ENCODE measurements at regions of chr1 and their contacts with region 1.

Region 1: GRCh38 chr1:77683160-77684148 is 996 bp upstream of the ZZZ3 start:
- DNase-seq: peak; percentile 91 to 94 (median 92)
- H3K4me3 ChIP-seq: peak overlapping the region; percentile 17 to 81
- H3K4me3 Mint-ChIP-seq: peak overlapping the region; percentile 85 to 95 (median 91)
- H3K27ac ChIP-seq: peak overlapping the region; percentile 88
- H3K27ac Mint-ChIP-seq: peak overlapping the region; percentile 93 to 98 (median 97)
- H3K4me1 ChIP-seq: peaks cover 45% of the 10 kb centered on the region
- H3K4me1 Mint-ChIP-seq: peaks cover 20 to 42% (median 31%) of the 10 kb centered on the region in 4 donors
- H3K27me3 ChIP-seq: no peaks in the 10 kb centered on the region
- H3K27me3 Mint-ChIP-seq: no peaks in the 10 kb centered on the region

Region 2: GRCh38 chr1:75724472-75725022 is 1958.9 kb before region 1 on chr1 and contains the start of gene ACADM:
- CTCF ChIA-PET with region 1: no interaction called
- POLR2A ChIA-PET with region 1: no interaction called
- intact Hi-C with region 1: loop called (anchors 2 kb)
- DNase-seq: peak; percentile 77 to 84 (median 79)
- H3K4me3 ChIP-seq: peak within 1 kb of the TSS; percentile 49 to 80
- H3K4me3 Mint-ChIP-seq: peak within 1 kb of the TSS; percentile 96 to 100 (median 99)
- H3K27ac ChIP-seq: peak within 1 kb of the TSS; percentile 73
- H3K27ac Mint-ChIP-seq: peak within 1 kb of the TSS; percentile 93 to 99 (median 97)
- H3K4me1 ChIP-seq: peaks cover 39% of the 10 kb centered on the region
- H3K4me1 Mint-ChIP-seq: peaks cover 22 to 49% (median 33%) of the 10 kb centered on the region in 4 donors
- H3K27me3 ChIP-seq: no peaks in the 10 kb centered on the region
- H3K27me3 Mint-ChIP-seq: no peaks in the 10 kb centered on the region
- total RNA-seq, gene ACADM: 31.9 to 33.4 TPM

Region 3: DNA sequence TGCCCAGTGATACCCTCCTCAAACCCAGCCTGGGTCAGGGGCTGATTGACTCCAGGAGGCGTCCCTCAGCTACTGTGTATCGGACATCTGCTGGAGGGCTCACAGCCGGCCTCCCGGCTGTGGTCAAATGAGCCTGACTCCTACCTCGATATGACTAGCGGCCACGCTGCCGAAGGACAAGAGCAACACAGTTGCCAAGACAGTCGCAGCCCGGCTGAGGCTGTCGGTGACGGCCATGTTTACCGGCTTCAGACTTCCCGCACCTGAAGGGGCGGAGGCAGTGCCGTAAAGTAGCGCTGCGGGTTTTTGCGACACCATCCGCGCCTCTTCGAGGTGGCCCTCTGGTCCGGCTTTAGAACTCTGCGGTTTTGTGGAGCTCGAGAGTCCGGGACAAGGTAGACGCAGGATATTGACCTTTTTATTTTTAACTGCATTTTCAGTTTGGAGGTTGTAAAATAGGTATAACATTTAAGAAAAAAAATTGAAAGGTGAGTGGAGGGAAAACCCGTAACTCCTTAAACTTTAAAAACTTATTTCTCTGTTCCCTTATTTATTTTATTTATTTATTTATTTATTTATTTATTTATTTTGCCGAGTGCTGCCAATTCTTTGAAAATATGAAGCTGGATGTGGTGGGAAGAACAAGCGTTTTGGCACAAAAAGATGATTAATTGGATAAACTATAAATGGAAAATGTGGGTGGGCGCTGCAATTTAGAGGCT is 464.1 kb before region 1 on chr1 and contains the start of gene PIGK:
- CTCF ChIA-PET with region 1: no interaction called
- POLR2A ChIA-PET with region 1: interaction called, 8 read pairs
- intact Hi-C with region 1: loop called (anchors 10 kb)
- DNase-seq: peak; percentile 84 to 87 (median 86)
- H3K4me3 ChIP-seq: peak within 1 kb of the TSS; percentile 90 to 99
- H3K4me3 Mint-ChIP-seq: peak within 1 kb of the TSS; percentile 93 to 99 (median 96)
- H3K27ac ChIP-seq: peak within 1 kb of the TSS; percentile 74
- H3K27ac Mint-ChIP-seq: peak within 1 kb of the TSS; percentile 93 to 97 (median 96)
- H3K4me1 ChIP-seq: peaks cover 33% of the 10 kb centered on the region
- H3K4me1 Mint-ChIP-seq: peaks cover 28 to 64% (median 50%) of the 10 kb centered on the region in 4 donors
- H3K27me3 ChIP-seq: no peaks in the 10 kb centered on the region
- H3K27me3 Mint-ChIP-seq: no peaks in the 10 kb centered on the region
- total RNA-seq, gene PIGK: 26.4 to 28.2 TPM

Region 4: DNA sequence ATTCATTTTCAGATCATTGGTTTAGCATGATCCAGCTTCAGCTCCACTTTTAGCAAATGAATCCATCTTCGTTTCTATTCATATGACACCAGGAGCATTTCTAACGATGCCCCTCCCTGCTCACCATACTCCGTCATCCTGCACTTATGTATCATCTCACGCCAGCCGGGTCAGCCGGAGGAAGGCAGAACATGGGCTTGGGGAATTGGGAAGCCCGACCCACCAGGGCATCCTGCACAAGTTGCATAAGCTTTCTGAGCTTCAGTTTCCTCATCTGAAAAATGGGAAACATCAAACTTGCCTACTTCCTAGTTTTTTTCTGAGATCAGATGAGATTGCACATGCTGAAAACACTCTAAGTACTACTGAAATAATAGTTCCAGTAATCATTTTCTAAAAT is 207.0 kb before region 1 on chr1:
- CTCF ChIA-PET with region 1: no interaction called
- POLR2A ChIA-PET with region 1: no interaction called
- intact Hi-C with region 1: no loop called
- DNase-seq: no peak
- H3K4me3 ChIP-seq: no peak overlapping the region
- H3K4me3 Mint-ChIP-seq: no peak overlapping the region
- H3K27ac ChIP-seq: no peak overlapping the region
- H3K27ac Mint-ChIP-seq: no peak overlapping the region
- H3K4me1 ChIP-seq: no peaks in the 10 kb centered on the region
- H3K4me1 Mint-ChIP-seq: peaks cover 0 to 6% (median 3%) of the 10 kb centered on the region in 4 donors
- H3K27me3 ChIP-seq: no peaks in the 10 kb centered on the region
- H3K27me3 Mint-ChIP-seq: peaks cover 0 to 3% of the 10 kb centered on the region in 2 donors

Region 5: DNA sequence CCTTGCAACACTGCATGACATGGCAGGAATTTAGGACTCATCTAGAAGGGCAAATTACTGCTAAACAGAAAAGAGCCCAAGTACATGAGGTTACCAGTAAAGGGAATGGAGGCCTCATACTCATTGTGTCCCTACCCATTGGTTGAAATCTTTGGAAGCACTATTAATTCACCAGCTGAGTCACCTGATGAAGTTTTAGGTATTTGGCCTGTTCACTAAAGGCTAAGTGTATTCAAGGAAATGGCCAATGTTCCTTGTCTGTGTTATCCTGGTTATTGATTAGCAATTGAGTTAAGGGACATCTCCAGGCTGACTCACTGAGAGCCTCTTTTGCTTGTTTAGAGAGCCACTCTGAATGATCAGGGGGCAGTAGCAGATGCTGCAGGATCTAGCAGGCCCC is 189.4 kb before region 1 on chr1:
- CTCF ChIA-PET with region 1: no interaction called
- POLR2A ChIA-PET with region 1: no interaction called
- intact Hi-C with region 1: no loop called
- DNase-seq: no peak
- H3K4me3 ChIP-seq: no peak overlapping the region
- H3K4me3 Mint-ChIP-seq: no peak overlapping the region
- H3K27ac ChIP-seq: no peak overlapping the region
- H3K27ac Mint-ChIP-seq: no peak overlapping the region
- H3K4me1 ChIP-seq: no peaks in the 10 kb centered on the region
- H3K4me1 Mint-ChIP-seq: peaks cover 0 to 8% (median 2%) of the 10 kb centered on the region in 4 donors
- H3K27me3 ChIP-seq: no peaks in the 10 kb centered on the region
- H3K27me3 Mint-ChIP-seq: no peaks in the 10 kb centered on the region

Region 6: DNA sequence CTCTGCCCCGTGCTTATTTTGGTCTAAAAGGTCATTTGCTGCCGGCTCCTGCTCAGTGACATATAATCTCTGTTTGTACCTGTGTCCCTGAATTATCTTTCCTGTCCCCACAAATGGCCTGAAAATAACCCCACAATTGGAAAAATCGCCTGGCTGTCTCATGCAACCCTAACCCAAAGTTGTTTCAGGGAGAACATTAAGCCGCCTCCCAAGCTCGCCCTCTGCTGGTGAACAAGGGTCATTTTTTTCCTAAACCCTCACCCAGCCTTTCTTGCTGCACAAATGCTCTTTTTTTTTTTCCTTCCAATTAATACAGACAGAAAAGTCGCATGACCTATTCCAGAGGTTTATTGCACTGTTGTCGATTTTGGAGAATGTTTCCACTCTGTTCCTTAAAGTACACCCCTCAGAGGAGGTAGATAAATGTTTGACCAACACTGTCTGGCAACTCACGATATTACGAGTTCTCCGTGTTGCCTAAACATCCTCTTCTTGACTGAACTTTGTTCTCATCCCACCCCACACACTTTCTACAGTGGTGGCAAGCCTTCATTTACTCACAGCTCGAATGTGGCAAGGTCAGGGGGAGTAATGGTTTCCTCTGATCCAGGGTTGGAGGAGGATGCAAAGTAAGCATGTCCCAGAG is 149.7 kb before region 1 on chr1:
- CTCF ChIA-PET with region 1: interaction called, 3 read pairs
- POLR2A ChIA-PET with region 1: no interaction called
- intact Hi-C with region 1: loop called (anchors 2 kb)
- DNase-seq: peak; percentile 60 to 65 (median 64)
- H3K4me3 ChIP-seq: no peak overlapping the region
- H3K4me3 Mint-ChIP-seq: peak overlapping the region in 5 of 8 donors; percentile 17 to 65 (median 32)
- H3K27ac ChIP-seq: no peak overlapping the region
- H3K27ac Mint-ChIP-seq: peak overlapping the region in 3 of 7 donors; percentile 32 to 83 (median 39)
- H3K4me1 ChIP-seq: peaks cover 3% of the 10 kb centered on the region
- H3K4me1 Mint-ChIP-seq: peaks cover 4 to 8% (median 5%) of the 10 kb centered on the region in 4 donors
- H3K27me3 ChIP-seq: no peaks in the 10 kb centered on the region
- H3K27me3 Mint-ChIP-seq: no peaks in the 10 kb centered on the region

Region 7: DNA sequence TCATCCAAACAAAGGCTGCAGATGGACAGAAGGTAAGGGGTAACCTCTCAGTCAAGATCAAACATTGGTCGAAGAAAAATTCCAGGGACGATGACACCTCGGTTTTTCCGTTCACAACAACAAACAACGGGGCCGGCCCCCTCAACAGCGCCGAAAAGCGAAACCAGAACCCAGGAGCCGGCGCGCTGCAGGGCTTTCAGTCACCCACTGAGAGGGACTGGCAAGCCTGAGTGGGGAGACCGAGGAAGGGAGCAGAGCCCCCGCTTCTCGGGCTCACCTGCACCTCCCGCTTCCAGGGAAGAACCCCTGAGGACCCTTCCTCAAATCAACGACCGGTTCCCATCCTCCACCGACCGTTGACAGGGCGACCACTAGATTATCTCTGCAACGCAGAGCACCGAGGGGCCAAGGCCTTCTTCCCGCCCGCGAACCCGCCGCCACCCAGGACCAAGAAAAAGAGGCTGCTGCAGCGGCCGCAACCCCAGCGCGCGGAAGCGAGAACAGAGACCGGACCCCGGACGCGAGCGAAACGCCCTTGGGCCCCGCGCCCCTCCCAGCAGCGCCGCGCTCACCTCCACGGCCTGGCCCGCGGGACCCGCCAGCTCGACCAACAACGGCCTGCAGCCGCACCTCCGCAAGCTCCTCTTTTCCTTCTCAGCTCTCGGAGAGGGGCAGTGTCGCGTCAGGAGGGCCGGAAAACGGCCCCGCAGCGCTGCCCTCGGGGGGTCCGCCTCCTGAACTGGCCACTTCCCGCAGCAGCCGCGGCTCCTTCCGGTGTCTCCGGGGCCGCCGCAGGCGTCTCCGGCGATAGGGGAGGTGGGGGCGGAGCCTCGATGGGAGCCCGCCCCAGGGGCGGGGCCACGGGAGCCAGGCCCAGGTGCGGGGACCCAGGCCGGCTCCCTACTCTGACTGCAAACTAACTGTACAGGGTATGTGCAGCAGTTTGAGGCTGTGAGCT is 75.9 kb after region 1 on chr1 and contains the start of gene USP33:
- CTCF ChIA-PET with region 1: no interaction called
- POLR2A ChIA-PET with region 1: no interaction called
- intact Hi-C with region 1: loop called (anchors 1 kb)
- DNase-seq: peak; percentile 89 to 93 (median 90)
- H3K4me3 ChIP-seq: peak within 1 kb of the TSS; percentile 55 to 76
- H3K4me3 Mint-ChIP-seq: peak within 1 kb of the TSS; percentile 90 to 97 (median 95)
- H3K27ac ChIP-seq: peak within 1 kb of the TSS; percentile 85
- H3K27ac Mint-ChIP-seq: peak within 1 kb of the TSS; percentile 92 to 97 (median 93)
- H3K4me1 ChIP-seq: peaks cover 48% of the 10 kb centered on the region
- H3K4me1 Mint-ChIP-seq: peaks cover 32 to 51% (median 39%) of the 10 kb centered on the region in 4 donors
- H3K27me3 ChIP-seq: no peaks in the 10 kb centered on the region
- H3K27me3 Mint-ChIP-seq: no peaks in the 10 kb centered on the region
- total RNA-seq, gene USP33: 87.4 to 89.1 TPM

Region 8: GRCh38 chr1:77797991-77798390 is 114.5 kb after region 1 on chr1:
- CTCF ChIA-PET with region 1: no interaction called
- POLR2A ChIA-PET with region 1: no interaction called
- intact Hi-C with region 1: no loop called
- DNase-seq: no peak
- H3K4me3 ChIP-seq: no peak overlapping the region
- H3K4me3 Mint-ChIP-seq: no peak overlapping the region
- H3K27ac ChIP-seq: no peak overlapping the region
- H3K27ac Mint-ChIP-seq: peak overlapping the region in 1 of 7 donors; percentile 71
- H3K4me1 ChIP-seq: no peaks in the 10 kb centered on the region
- H3K4me1 Mint-ChIP-seq: peaks cover 6 to 16% (median 10%) of the 10 kb centered on the region in 4 donors
- H3K27me3 ChIP-seq: no peaks in the 10 kb centered on the region
- H3K27me3 Mint-ChIP-seq: no peaks in the 10 kb centered on the region

Region 9: DNA sequence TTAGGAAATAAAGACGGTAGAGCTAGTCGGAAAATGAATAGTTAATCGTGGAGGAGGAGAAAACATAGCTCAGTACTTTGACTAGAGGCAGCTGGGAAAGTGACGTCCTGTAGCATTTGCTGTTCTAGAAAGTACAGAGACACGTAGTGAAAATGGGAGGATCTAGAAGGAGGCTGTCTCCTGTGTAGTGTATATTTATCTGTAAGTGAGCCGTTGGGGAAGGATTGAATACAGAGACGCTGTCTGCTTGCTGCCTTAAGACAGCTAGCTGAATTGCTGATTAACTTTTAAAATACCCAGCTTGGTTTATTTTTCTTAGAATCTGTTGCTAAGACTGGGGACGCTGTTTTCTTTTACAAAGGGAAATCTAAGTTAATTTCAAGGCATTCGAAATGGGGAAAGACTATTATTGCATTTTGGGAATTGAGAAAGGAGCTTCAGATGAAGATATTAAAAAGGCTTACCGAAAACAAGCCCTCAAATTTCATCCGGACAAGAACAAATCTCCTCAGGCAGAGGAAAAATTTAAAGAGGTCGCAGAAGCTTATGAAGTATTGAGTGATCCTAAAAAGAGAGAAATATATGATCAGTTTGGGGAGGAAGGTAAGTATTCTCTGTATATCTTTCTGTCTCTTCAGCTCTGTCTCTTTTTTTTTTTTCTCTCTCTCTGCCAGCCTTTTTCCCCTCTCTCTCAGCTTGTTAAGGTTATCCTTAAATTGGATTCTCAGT is 321.4 kb after region 1 on chr1 and contains the start of gene DNAJB4:
- CTCF ChIA-PET with region 1: interaction called, 3 read pairs
- POLR2A ChIA-PET with region 1: interaction called, 19 read pairs
- intact Hi-C with region 1: loop called (anchors 2 kb)
- DNase-seq: peak; percentile 80 to 90 (median 89)
- H3K4me3 ChIP-seq: peak within 1 kb of the TSS; percentile 73 to 85
- H3K4me3 Mint-ChIP-seq: peak within 1 kb of the TSS; percentile 78 to 95 (median 90)
- H3K27ac ChIP-seq: peak within 1 kb of the TSS; percentile 72
- H3K27ac Mint-ChIP-seq: peak within 1 kb of the TSS; percentile 96 to 99 (median 98)
- H3K4me1 ChIP-seq: peaks cover 31% of the 10 kb centered on the region
- H3K4me1 Mint-ChIP-seq: peaks cover 16 to 48% (median 26%) of the 10 kb centered on the region in 4 donors
- H3K27me3 ChIP-seq: no peaks in the 10 kb centered on the region
- H3K27me3 Mint-ChIP-seq: no peaks in the 10 kb centered on the region
- total RNA-seq, gene DNAJB4: 15.5 to 18.3 TPM

Measured in CD4-positive, alpha-beta memory T cell (primary cell).